PC-3 (cell line): ENCODE measurements at regions of chr3 and their contacts with region 1.

Region 1: DNA sequence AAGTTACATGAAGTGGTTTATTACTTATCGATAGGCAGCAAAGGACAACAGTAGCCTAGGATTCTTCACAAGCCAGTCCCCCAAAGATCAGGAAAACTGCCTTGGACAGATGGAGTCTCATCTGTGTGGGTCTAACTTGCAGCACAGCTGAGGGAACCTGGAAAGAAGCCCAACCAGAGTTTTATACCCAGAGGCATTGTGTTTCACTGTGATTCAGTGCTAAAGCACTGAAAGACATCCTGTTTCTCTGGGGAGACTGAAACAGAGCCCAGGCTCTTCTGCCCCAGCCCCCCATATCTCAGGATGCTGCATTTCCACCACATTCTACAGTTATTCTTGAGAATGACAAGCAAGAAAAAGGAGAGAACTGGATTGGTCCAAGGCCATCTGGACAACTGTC is 48.2 kb upstream of the PYDC2 start:
- DNase-seq: peak; percentile 92
- ATAC-seq: peak; percentile 89
- H3K4me3 ChIP-seq: no peak overlapping the region
- H3K27ac ChIP-seq: no peak overlapping the region
- H3K4me1 ChIP-seq: peaks cover 11% of the 10 kb centered on the region
- H3K27me3 ChIP-seq: no peaks in the 10 kb centered on the region
- CTCF ChIP-seq: no peak

Region 2: DNA sequence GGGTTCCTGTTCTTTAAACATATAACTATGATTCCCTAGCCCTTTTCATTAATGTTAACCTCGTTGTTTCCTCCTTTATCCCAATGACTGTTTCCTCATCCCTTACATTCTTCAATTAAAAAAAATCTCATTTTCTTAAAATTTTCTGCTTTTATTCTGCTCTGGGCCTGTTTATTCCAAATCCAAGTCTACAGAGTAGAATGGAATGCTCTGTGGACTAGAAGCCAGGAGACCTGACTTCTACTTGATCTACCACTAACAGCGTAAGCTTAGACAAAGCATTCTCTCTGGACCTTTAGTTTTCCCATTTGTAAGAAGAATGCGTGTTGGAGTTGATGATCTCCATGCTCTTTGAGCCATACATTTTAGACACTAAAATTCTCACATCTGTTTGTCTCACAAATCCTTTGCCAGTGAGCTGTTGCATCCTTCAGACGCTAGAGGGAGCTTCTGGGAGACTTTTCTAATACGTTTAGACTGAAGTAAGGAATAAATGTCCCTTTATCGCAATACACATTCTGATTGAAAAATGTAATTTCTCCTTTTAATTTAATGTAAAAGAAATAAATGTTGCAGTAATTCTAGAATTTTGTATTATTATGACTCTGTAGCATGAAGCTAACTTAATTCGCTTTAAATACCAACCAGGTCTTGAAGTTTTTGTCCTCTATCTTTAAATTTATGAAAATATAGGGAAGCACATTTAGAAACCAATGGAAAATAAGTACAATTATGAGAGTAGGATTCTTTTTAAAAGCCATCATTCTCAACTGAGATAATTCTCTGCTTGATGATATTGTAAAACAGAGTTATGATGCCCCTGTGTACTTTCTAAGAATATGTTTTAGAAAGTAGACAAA is 528.6 kb before region 1 on chr3:
- CTCF ChIA-PET with region 1: no interaction called
- POLR2A ChIA-PET with region 1: no interaction called
- intact Hi-C with region 1: loop called (anchors 10 kb)
- DNase-seq: peak; percentile 88
- ATAC-seq: peak; percentile 89
- H3K4me3 ChIP-seq: peak overlapping the region; percentile 35; the same call in 1 of the 2 replicates
- H3K27ac ChIP-seq: no peak overlapping the region
- H3K4me1 ChIP-seq: no peaks in the 10 kb centered on the region
- H3K27me3 ChIP-seq: no peaks in the 10 kb centered on the region
- CTCF ChIP-seq: peak; percentile 96

Region 3: GRCh38 chr3:191441687-191442086 is 28.9 kb after region 1 on chr3:
- CTCF ChIA-PET with region 1: no interaction called
- POLR2A ChIA-PET with region 1: no interaction called
- intact Hi-C with region 1: no loop called
- DNase-seq: no peak
- ATAC-seq: no peak
- H3K4me3 ChIP-seq: no peak overlapping the region
- H3K27ac ChIP-seq: no peak overlapping the region
- H3K4me1 ChIP-seq: no peaks in the 10 kb centered on the region
- H3K27me3 ChIP-seq: peaks cover 56% of the 10 kb centered on the region
- CTCF ChIP-seq: no peak

Region 4: GRCh38 chr3:191502583-191502982 is 89.8 kb after region 1 on chr3:
- CTCF ChIA-PET with region 1: no interaction called
- POLR2A ChIA-PET with region 1: no interaction called
- intact Hi-C with region 1: loop called (anchors 2 kb)
- DNase-seq: peak; percentile 51
- ATAC-seq: peak; percentile 50
- H3K4me3 ChIP-seq: no peak overlapping the region
- H3K27ac ChIP-seq: no peak overlapping the region
- H3K4me1 ChIP-seq: peaks cover 3% of the 10 kb centered on the region; the same call in 1 of the 2 replicates
- H3K27me3 ChIP-seq: peaks cover 55% of the 10 kb centered on the region
- CTCF ChIP-seq: peak; percentile 76

Region 5: GRCh38 chr3:191707817-191708216 is 295.1 kb after region 1 on chr3:
- CTCF ChIA-PET with region 1: no interaction called
- POLR2A ChIA-PET with region 1: no interaction called
- intact Hi-C with region 1: loop called (anchors 5 kb)
- DNase-seq: no peak
- ATAC-seq: no peak
- H3K4me3 ChIP-seq: no peak overlapping the region
- H3K27ac ChIP-seq: no peak overlapping the region
- H3K4me1 ChIP-seq: no peaks in the 10 kb centered on the region
- H3K27me3 ChIP-seq: no peaks in the 10 kb centered on the region
- CTCF ChIP-seq: no peak

Region 6: DNA sequence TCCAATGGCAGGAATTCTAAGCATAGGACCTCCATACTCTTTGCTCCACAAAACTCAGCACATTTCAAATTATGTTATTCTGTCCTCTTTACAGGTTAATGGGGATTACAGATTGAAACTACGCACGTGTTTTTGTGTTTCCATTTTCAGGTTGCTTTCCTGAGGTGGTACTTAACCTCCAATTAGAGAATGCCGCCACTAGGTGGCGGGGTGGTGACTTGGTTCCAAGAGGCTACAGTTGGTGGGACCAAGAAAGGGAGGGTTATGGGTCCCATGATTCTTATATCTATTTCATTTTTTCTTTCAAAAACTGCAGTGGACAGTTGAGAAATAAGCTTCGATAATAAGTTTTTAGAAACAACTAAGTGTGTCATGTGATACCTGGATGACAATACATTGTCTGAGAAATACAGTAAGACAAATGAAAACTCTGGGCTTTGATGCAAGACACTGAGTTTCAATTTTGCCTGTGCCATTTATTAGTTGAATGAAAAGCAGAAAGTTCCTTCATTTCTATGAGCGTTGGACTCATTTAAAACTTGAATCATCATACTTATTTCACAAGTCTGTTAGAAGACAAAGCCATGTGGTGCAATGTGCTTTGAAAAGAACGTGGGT is 775.6 kb after region 1 on chr3:
- CTCF ChIA-PET with region 1: no interaction called
- POLR2A ChIA-PET with region 1: no interaction called
- intact Hi-C with region 1: loop called (anchors 10 kb)
- DNase-seq: peak; percentile 71
- ATAC-seq: peak; percentile 73
- H3K4me3 ChIP-seq: no peak overlapping the region
- H3K27ac ChIP-seq: no peak overlapping the region
- H3K4me1 ChIP-seq: no peaks in the 10 kb centered on the region
- H3K27me3 ChIP-seq: peaks cover 6% of the 10 kb centered on the region; the same call in 1 of the 2 replicates
- CTCF ChIP-seq: peak; percentile 88